Activated CD4-positive, alpha-beta T cell treated with anti-CD3 and anti-CD28 coated beads, Interleukin-2, amount 10 ng/mL, durations not matched to agents 24 days and 14 days (primary cell): ENCODE measurements at regions of chr17 and their contacts with region 1.

Region 1: GRCh38 chr17:19766422-19767270 is 18.5 kb upstream of the ALDH3A1 start:
- DNase-seq: peak; percentile 94
- H3K4me3 Mint-ChIP-seq: no peak overlapping the region
- H3K27ac Mint-ChIP-seq: peak overlapping the region; percentile 62
- H3K4me1 Mint-ChIP-seq: peaks cover 24% of the 10 kb centered on the region
- H3K27me3 Mint-ChIP-seq: peaks cover 1% of the 10 kb centered on the region

Region 2: GRCh38 chr17:19513897-19514488 is 252.7 kb before region 1 on chr17:
- intact Hi-C with region 1: loop called (anchors 1 kb)
- DNase-seq: peak; percentile 89
- H3K4me3 Mint-ChIP-seq: no peak overlapping the region
- H3K27ac Mint-ChIP-seq: no peak overlapping the region
- H3K4me1 Mint-ChIP-seq: peaks cover 7% of the 10 kb centered on the region
- H3K27me3 Mint-ChIP-seq: no peaks in the 10 kb centered on the region

Region 3: DNA sequence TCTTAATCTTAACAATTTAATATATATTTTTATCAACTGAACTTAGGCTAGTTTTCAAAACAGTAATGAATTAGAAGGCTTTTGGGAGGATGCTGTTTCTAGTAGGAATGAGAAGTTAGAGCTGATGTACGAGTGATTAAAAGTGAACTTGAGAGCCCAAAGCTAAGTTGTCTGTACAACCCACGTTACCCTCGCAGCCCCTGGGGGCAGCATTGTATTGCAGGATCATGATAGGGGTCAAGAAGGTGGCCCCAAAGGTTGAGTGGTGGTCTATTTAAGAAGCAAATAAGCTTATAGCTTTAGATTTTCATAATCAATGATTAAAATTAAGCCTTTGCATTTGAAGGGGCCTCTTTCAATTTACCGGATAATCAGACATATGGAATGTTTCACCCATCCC is 151.7 kb before region 1 on chr17:
- intact Hi-C with region 1: loop called (anchors 10 kb)
- DNase-seq: no peak
- H3K4me3 Mint-ChIP-seq: no peak overlapping the region
- H3K27ac Mint-ChIP-seq: no peak overlapping the region
- H3K4me1 Mint-ChIP-seq: no peaks in the 10 kb centered on the region
- H3K27me3 Mint-ChIP-seq: no peaks in the 10 kb centered on the region

Region 4: GRCh38 chr17:19940722-19941464 is 174.2 kb after region 1 on chr17:
- intact Hi-C with region 1: no loop called
- DNase-seq: no peak
- H3K4me3 Mint-ChIP-seq: no peak overlapping the region
- H3K27ac Mint-ChIP-seq: no peak overlapping the region
- H3K4me1 Mint-ChIP-seq: peaks cover 10% of the 10 kb centered on the region
- H3K27me3 Mint-ChIP-seq: no peaks in the 10 kb centered on the region